Lower leg skin (tissue), 4 donors: ENCODE measurements at regions of chrX and their contacts with region 1.

Region 1: GRCh38 chrX:119729408-119730201 is 28.8 kb upstream of the SOWAHD start:
- DNase-seq: peak; percentile 25 to 84
- H3K4me3 ChIP-seq: no peak overlapping the region
- CTCF ChIP-seq: no peak
- POLR2A ChIP-seq: no peak

Region 2: GRCh38 chrX:119516157-119516702 is 213.4 kb before region 1 on chrX:
- intact Hi-C with region 1: loop called (anchors 5 kb)
- DNase-seq: no peak
- H3K4me3 ChIP-seq: no peak overlapping the region
- CTCF ChIP-seq: peak in 1 of 3 donors; percentile 36
- POLR2A ChIP-seq: no peak